ENCODE measurements at regions of chr2 and their contacts with region 1.

Region 1: GRCh38 chr2:118046634-118047210 is 32.9 kb upstream of the CCDC93 start:
- DNase-seq: peak; percentile 48
- H3K27ac ChIP-seq: no peak overlapping the region
- CTCF ChIP-seq: peak; percentile 66

Region 2: DNA sequence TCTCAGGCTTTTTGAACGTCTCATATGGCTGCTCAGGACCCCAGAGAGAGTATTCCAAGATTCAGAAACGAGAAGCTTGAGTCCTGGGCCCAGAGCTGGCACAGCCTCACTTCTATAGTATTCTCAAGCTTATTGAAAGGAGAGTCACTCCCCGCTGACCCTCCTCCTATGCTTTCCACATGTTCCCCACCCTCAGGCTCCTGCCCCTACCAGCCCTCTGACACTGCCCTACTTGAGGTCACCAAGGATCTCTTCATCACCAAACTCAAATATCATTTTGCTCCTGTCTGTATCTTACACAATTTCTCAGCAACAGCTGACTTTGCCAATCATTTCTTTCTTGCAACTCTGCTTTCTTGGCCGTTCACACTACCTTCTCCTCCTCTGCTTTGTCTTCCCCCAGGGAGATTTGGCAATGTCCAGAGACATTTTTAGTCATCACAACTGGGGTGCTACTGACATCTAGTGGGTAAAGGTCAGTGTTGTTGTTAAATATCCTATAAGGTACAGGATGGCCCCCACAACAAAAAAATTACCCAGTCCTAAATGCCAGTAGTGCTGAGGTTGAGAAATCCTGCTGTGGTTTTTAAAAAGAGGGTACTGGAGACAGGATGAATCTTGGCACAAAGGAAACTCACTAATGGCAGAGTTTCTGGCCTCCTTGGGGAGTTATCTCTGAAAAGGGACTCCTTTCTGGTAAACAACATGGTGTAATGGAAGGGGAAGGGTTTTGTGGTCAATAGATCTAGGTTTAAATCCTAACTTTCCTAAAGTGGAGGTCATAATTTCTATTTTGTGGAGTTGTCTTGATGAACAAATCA is 14.6 kb after region 1 on chr2:
- CTCF ChIA-PET with region 1: interaction called, 18 read pairs
- POLR2A ChIA-PET with region 1: no interaction called
- DNase-seq: peak; percentile 48
- H3K27ac ChIP-seq: no peak overlapping the region
- CTCF ChIP-seq: peak; percentile 24; the same call in 1 of the 2 replicates

Region 3: GRCh38 chr2:118169359-118170007 is 122.8 kb after region 1 on chr2:
- CTCF ChIA-PET with region 1: no interaction called
- POLR2A ChIA-PET with region 1: no interaction called
- DNase-seq: no peak
- H3K27ac ChIP-seq: peak overlapping the region; percentile 41; the same call in 1 of the 2 replicates
- CTCF ChIP-seq: no peak

Measured in RWPE1 (cell line).